Activated CD8-positive, alpha-beta memory T cell treated with anti-CD3 and anti-CD28 coated beads, Interleukin-2, amount 10 ng/mL, durations not matched to agents 7 days and 5 days (primary cell): ENCODE measurements at regions of chr1 and their contacts with region 1.

Region 1: GRCh38 chr1:179002552-179003345 is 22.9 kb upstream of the FAM20B start:
- DNase-seq: peak; percentile 75
- ATAC-seq: peak; percentile 82
- H3K4me3 Mint-ChIP-seq: no peak overlapping the region
- H3K27ac Mint-ChIP-seq: no peak overlapping the region
- H3K4me1 Mint-ChIP-seq: peaks cover 17% of the 10 kb centered on the region
- H3K27me3 Mint-ChIP-seq: no peaks in the 10 kb centered on the region

Region 2: DNA sequence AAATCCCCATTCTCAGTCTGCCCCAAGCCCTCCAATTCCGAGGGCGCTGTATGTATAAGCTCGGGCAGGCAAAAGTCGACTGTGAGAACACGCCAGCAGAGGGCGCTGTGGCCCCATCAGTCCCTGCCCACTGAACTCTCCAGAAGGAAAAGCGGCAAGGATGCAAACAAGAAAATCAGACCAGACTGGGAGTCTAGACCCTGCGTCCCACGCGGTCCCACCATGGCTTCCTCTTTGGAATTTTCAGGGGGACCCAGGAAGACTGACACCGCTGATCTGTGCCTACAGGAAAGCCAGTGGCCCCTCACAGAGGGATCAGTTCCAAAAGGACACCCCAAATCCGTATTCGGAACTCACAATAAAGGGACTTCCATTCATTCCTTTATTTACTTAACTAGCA is 470.4 kb before region 1 on chr1:
- CTCF ChIA-PET with region 1: interaction called, 10 read pairs
- DNase-seq: peak; percentile 76
- ATAC-seq: peak; percentile 94
- H3K4me3 Mint-ChIP-seq: no peak overlapping the region
- H3K27ac Mint-ChIP-seq: no peak overlapping the region
- H3K4me1 Mint-ChIP-seq: peaks cover 2% of the 10 kb centered on the region
- H3K27me3 Mint-ChIP-seq: no peaks in the 10 kb centered on the region

Region 3: DNA sequence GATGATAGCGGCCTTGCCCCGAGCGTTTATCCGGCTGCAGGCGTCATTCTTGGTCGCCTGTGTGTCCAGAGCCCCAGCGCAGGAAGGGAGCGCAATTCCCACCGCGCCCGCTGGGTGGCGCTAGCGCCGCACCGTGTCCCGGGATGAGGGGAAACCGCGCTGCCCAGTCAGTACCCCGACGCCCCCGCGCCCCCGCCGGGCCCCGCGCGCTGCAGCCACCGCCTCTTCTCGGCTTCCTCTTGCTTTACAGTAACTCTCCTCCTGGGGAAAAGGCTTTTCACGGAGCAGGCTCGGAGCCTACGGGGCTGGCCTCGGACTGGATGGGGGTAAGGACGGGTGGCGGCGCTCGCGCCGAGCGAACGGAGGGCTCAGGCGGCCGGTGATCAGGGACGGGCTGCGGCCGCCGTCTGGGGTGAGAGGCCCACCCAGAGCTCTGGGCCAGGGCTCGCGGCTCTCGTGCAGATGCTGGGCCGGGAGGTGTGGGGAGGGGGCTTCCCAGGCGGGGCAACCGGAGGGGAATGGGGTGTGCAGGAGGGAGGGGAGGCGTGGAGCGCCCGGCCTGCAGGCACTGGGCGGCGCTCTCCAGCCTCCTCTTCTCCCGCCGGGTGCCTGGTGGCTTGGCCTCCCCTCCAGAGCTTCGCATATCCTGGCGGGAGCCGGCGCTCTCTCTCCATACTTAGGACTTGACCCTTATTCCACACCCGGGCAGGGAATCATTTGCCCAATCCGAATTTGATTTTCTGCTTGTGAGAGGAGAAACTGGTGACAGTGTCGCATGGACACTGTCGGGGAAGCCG is 460.0 kb before region 1 on chr1:
- CTCF ChIA-PET with region 1: interaction called, 14 read pairs
- DNase-seq: peak; percentile 88
- ATAC-seq: peak; percentile 94
- H3K4me3 Mint-ChIP-seq: peak overlapping the region; percentile 88
- H3K27ac Mint-ChIP-seq: peak overlapping the region; percentile 85
- H3K4me1 Mint-ChIP-seq: peaks cover 4% of the 10 kb centered on the region
- H3K27me3 Mint-ChIP-seq: no peaks in the 10 kb centered on the region

Region 4: GRCh38 chr1:178768423-178768822 is 234.3 kb before region 1 on chr1:
- CTCF ChIA-PET with region 1: interaction called, 20 read pairs
- DNase-seq: peak; percentile 43
- ATAC-seq: peak; percentile 58
- H3K4me3 Mint-ChIP-seq: no peak overlapping the region
- H3K27ac Mint-ChIP-seq: no peak overlapping the region
- H3K4me1 Mint-ChIP-seq: no peaks in the 10 kb centered on the region
- H3K27me3 Mint-ChIP-seq: no peaks in the 10 kb centered on the region

Region 5: DNA sequence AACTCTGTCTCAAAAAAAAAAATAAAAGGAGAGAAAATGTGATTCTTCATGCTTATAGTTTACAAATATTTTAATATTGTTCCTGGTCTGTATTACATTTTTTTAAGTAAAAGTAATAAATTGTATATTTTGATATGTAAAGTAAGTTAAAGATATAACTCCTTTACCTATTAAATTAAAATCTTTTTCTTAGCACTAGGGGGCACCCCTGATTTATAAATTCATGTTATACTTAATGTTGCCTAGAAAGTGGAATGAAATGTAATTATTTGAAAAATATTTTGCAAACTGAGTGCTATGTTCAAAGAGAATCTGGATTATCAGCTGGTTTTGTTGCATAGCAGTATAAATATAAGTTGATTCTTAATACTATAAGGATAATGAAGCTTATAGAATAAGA is 228.5 kb before region 1 on chr1:
- CTCF ChIA-PET with region 1: interaction called, 20 read pairs
- DNase-seq: no peak
- ATAC-seq: no peak
- H3K4me3 Mint-ChIP-seq: no peak overlapping the region
- H3K27ac Mint-ChIP-seq: no peak overlapping the region
- H3K4me1 Mint-ChIP-seq: no peaks in the 10 kb centered on the region
- H3K27me3 Mint-ChIP-seq: no peaks in the 10 kb centered on the region

Region 6: DNA sequence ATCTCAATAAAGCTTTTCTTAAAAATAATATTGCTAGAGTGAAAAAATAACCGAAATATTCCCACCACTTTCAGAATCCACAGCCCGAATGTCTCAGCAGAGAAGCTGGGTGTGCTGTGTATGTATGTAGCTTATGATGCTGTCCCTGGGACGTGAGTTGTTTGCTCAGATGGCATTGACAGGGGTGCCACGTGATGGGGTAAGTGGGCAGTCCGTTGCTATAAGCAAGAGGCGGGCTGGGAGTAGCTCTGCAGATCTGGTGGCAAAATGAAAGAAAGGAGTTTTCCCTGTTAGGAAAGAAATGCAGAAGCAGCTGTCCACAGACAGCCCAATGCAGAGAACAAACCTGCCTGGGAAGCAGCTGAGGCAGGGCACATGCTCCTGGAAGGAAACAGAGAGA is 19.1 kb after region 1 on chr1:
- CTCF ChIA-PET with region 1: interaction called, 12 read pairs
- DNase-seq: no peak
- ATAC-seq: no peak
- H3K4me3 Mint-ChIP-seq: no peak overlapping the region
- H3K27ac Mint-ChIP-seq: no peak overlapping the region
- H3K4me1 Mint-ChIP-seq: peaks cover 9% of the 10 kb centered on the region
- H3K27me3 Mint-ChIP-seq: peaks cover 9% of the 10 kb centered on the region